ENCODE measurements at regions of chr4 and their contacts with region 1.

Region 1: GRCh38 chr4:41216294-41217019 is 2.1 kb upstream of the APBB2 start:
- DNase-seq: peak; percentile 83
- H3K4me3 ChIP-seq: peak overlapping the region; percentile 60 to 62
- H3K27ac ChIP-seq: peak overlapping the region; percentile 73 to 79
- H3K4me1 ChIP-seq: no peaks in the 10 kb centered on the region
- H3K27me3 ChIP-seq: no peaks in the 10 kb centered on the region
- CTCF ChIP-seq: peak in 2 of 3 experiments; percentile 8 to 17
- POLR2A ChIP-seq: no peak

Region 2: DNA sequence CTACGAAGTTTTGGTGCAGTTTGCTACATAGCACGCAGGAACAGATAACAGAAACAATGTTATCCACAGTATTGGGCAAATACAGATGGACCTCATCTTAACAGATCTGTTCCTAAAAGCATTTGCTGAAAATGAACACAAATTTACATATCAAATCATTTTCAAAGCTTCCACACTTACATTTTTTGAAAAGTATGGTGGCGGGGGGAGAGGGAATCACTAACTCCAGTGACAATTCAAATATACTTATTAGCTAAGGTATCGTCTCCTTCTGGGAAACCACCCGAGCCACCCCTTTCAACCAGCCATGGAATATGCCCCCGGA is 291.7 kb before region 1 on chr4:
- intact Hi-C with region 1: loop called (anchors 5 kb)
- DNase-seq: no peak
- H3K4me3 ChIP-seq: no peak overlapping the region
- H3K27ac ChIP-seq: no peak overlapping the region
- H3K4me1 ChIP-seq: no peaks in the 10 kb centered on the region
- H3K27me3 ChIP-seq: no peaks in the 10 kb centered on the region
- CTCF ChIP-seq: no peak
- POLR2A ChIP-seq: no peak

Region 3: DNA sequence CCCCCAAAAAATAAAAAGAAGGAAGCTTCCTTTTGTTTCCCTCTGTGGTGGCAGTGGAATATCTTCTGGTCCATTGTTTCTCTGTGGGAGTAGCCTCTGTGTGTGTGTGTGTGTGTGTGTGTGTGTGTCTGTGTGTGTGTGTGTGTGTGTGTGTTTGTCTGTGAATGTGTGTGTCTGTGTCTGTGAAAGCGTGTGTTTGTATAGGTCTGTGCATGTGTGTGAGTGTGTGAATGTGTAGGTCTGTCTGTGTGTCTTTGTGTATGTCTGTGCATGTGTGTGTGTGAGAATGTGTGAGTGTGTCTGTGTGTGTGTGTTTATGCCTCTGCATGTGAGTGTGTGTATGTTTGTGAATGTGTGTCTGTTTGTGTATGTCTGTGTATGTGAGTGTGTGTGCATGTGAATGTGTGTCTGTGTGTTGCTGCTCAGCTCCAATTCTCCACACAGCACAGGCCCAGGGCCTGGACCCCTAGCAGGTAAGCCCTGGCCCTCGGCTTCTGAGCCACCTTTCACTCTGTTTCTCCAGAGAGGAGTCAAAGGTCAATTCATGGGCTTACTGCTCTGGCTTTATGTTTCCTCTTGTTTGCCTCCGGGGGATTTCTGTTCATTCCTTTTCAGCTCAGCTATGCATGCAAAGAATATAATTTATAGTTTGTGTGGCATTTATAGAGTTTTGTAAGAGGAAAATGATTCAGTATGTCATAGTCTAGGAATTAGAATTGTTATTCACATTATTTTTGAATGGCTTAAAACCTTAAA is 130.0 kb after region 1 on chr4:
- intact Hi-C with region 1: no loop called
- DNase-seq: no peak
- H3K4me3 ChIP-seq: no peak overlapping the region
- H3K27ac ChIP-seq: no peak overlapping the region
- H3K4me1 ChIP-seq: no peaks in the 10 kb centered on the region
- H3K27me3 ChIP-seq: no peaks in the 10 kb centered on the region
- CTCF ChIP-seq: no peak
- POLR2A ChIP-seq: no peak